ENCODE measurements at regions of chr15 and their contacts with region 1.

Region 1: GRCh38 chr15:99059010-99059981 is 45.6 kb upstream of the SYNM start:
- DNase-seq: peak; percentile 46
- H3K4me3 ChIP-seq: peak overlapping the region; percentile 50
- CTCF ChIP-seq: peak; percentile 59

Region 2: GRCh38 chr15:98966091-98966787 is 93.1 kb before region 1 on chr15:
- CTCF ChIA-PET with region 1: no interaction called
- POLR2A ChIA-PET with region 1: no interaction called
- DNase-seq: no peak
- H3K4me3 ChIP-seq: no peak overlapping the region
- CTCF ChIP-seq: no peak

Region 3: DNA sequence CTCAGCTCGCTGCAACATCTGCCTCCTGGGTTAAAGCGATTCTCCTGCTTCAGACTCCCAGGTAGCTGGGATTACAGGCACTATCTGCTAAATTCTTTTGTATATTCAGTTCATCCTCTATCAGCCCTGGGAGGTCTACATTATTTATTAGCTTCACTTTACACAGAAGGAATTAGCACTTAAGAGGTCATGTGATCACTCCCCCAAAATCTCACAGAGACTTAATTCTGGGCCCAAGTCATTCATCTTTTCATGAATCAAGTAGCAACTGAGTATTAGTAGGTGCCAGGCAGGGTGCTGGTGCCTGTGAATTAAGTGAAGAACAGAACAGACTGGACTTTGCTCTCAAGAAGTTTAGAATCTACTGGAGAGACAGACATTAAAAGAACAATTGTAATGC is 25.6 kb before region 1 on chr15:
- CTCF ChIA-PET with region 1: interaction called, 11 read pairs
- POLR2A ChIA-PET with region 1: no interaction called
- DNase-seq: no peak
- H3K4me3 ChIP-seq: no peak overlapping the region
- CTCF ChIP-seq: no peak

Region 4: GRCh38 chr15:99070208-99070607 is 10.9 kb after region 1 on chr15:
- CTCF ChIA-PET with region 1: interaction called, 101 read pairs
- POLR2A ChIA-PET with region 1: no interaction called
- DNase-seq: no peak
- H3K4me3 ChIP-seq: no peak overlapping the region
- CTCF ChIP-seq: no peak

Measured in AG04449 (cell line).